AG04450 (cell line): ENCODE measurements at regions of chr4 and their contacts with region 1.

Region 1: DNA sequence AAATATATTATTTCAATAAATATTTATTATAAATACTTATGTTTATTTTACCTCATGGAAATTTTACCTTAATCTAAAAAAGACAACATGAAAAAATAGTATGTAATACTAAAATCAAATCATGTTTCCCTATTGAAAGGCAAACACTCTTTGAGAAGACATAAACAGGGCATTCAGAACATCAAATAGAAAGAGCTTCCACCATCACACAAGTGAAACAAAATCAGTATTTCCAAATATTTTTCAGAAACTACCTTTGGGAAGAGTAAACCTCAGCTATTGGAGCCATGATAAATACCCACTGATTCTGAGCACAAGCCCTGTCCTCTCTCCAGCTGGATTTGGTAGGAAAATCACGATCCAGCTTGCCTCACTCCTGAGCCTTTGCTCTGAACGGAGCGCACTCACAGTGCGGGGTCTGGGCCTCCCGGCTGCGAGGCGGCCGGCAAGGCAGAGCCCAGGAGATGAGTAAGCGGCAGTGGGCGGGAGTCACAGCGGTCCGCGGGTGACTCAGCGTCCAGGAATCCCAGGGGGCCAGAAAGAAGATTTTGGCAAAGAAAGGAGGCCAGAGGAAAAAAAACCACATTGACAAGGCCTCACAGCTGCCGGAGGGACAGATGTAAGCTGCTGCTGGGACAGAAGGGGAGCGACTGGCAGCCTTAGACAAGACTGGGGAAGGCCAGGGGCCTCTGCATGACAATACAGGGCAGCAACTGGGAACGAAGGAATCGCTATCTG is 14.7 kb upstream of the ANXA5 start:
- DNase-seq: peak; percentile 94
- H3K4me3 ChIP-seq: peak overlapping the region; percentile 55
- H3K27ac ChIP-seq: peak overlapping the region; percentile 89
- H3K27me3 ChIP-seq: no peaks in the 10 kb centered on the region
- CTCF ChIP-seq: no peak

Region 2: GRCh38 chr4:121050300-121050699 is 661.1 kb before region 1 on chr4:
- CTCF ChIA-PET with region 1: no interaction called
- POLR2A ChIA-PET with region 1: no interaction called
- DNase-seq: no peak
- H3K4me3 ChIP-seq: no peak overlapping the region
- H3K27ac ChIP-seq: no peak overlapping the region
- H3K27me3 ChIP-seq: no peaks in the 10 kb centered on the region
- CTCF ChIP-seq: peak; percentile 44

Region 3: DNA sequence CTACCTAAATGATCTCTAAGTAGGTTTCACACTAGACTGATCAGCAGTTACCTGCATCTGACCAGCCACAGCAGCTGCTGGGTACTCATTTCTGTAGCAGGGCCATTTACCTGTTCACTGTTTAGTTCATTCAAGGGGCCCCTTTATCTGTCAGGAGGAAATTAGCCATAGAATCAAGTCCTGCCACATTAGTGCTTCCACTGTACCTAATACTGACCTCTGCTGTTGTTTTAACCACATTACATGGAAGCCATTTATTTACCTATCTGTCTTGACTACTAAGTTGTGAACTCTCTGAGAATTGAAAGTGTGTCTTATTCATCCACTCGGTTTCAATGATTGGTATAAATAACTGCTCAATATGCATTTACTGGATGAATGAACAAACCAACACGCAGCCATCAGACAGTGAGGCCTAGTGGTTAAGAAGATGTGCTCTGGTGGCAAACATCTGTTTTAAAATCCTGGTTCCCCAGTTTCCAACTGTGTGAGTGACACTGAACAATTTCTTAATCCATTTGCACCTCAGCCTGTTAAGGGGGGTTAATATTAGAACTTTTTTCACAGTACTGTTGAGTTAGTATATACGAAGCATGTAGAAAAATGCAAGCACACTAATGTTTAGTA is 15.3 kb after region 1 on chr4:
- CTCF ChIA-PET with region 1: interaction called, 10 read pairs
- POLR2A ChIA-PET with region 1: interaction called, 7 read pairs
- DNase-seq: no peak
- H3K4me3 ChIP-seq: no peak overlapping the region
- H3K27ac ChIP-seq: no peak overlapping the region
- H3K27me3 ChIP-seq: no peaks in the 10 kb centered on the region
- CTCF ChIP-seq: peak; percentile 75